ENCODE measurements at regions of chrX and their contacts with region 1.

Region 1: GRCh38 chrX:11100281-11101035 is 10.7 kb upstream of the HCCS start:
- DNase-seq: no peak
- ATAC-seq: no peak
- H3K4me3 ChIP-seq: no peak overlapping the region
- H3K27ac ChIP-seq: no peak overlapping the region
- H3K4me1 ChIP-seq: no peaks in the 10 kb centered on the region
- H3K27me3 ChIP-seq: no peaks in the 10 kb centered on the region
- CTCF ChIP-seq: peak in 2 of 3 experiments; percentile 27 to 45; a peak in 4 of 6 replicates
- POLR2A ChIP-seq: no peak
- RAD21 ChIP-seq: peak; percentile 55

Region 2: DNA sequence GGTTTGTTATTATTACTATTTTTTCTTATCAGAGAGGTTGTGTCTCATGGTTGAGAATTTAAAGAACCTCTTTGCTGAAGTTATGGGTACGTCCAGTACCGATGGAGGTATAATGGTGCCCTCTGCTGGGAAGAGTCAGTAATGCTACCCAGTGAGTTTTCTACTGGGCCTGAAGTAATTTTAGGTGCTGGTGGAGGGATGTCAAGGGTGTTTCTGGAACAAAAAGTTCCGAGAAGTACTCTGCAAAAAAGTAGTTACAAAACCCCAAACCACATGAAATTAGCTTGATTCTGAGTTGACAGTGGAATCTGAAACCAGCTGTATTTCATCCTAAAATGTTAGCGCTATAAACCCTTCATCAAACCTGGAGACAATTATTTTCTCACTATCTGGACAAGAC is 377.6 kb before region 1 on chrX:
- CTCF ChIA-PET with region 1: interaction called, 7 read pairs
- POLR2A ChIA-PET with region 1: no interaction called
- RAD21 ChIA-PET with region 1: no interaction called
- intact Hi-C with region 1: loop called (anchors 10 kb)
- DNase-seq: peak; percentile 10
- ATAC-seq: peak; percentile 84
- H3K4me3 ChIP-seq: no peak overlapping the region
- H3K27ac ChIP-seq: no peak overlapping the region
- H3K4me1 ChIP-seq: no peaks in the 10 kb centered on the region
- H3K27me3 ChIP-seq: no peaks in the 10 kb centered on the region
- CTCF ChIP-seq: peak; percentile 53 to 68 (median 57); a peak in 5 of 6 replicates
- POLR2A ChIP-seq: no peak
- RAD21 ChIP-seq: peak; percentile 64

Region 3: DNA sequence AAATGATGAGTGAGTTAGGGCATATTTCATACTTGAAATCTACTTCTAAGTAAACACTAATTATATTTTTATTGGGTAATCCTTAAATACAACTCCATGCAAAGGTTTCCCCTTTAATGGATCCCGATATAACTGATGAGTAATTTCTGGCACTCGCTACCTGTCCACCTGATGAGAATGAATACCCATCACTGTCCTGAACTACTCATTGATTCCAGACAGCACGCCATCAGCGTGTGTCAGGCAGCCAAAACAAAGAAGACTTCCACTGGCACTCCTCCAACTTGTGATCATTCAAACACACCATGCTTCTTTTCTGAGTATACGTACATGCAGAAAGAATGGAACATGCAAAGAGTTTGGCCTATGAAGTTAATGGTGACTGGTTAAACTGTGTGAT is 80.1 kb after region 1 on chrX:
- CTCF ChIA-PET with region 1: no interaction called
- POLR2A ChIA-PET with region 1: no interaction called
- RAD21 ChIA-PET with region 1: no interaction called
- intact Hi-C with region 1: no loop called
- DNase-seq: no peak
- ATAC-seq: no peak
- H3K4me3 ChIP-seq: no peak overlapping the region
- H3K27ac ChIP-seq: no peak overlapping the region
- H3K4me1 ChIP-seq: no peaks in the 10 kb centered on the region
- H3K27me3 ChIP-seq: no peaks in the 10 kb centered on the region
- CTCF ChIP-seq: no peak
- POLR2A ChIP-seq: no peak
- RAD21 ChIP-seq: no peak

Region 4: DNA sequence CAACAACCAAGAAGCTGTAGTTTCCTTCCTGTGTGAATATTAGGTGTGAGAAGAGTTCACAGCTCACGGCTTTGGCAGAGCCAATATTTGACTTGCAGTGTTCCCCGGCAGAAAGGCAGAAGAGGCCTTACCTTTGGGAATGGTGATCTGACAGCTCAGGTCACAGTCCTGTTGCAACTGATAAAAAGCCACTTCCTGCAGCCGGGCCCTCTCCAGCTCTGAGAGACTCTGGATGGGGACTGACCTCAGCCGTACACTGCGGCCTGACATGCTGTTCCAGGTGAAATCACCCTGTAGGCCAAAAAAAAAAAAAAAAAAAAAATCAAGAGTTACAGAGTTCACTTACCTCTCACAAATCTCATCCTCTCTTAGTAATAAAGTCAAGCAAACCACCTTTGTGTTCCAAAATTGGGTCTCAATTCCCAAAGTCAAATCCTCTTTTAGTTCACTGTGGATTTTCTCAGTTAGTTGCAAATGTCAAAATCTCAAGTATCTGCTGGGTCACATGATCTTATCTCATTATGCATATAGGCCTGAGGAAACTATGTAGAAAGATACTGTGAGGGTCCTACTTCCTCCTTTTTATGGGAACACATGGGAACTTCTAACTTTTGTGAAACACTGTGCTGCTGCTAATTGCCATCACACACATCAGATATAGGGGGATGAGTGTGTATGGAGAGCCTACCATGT is 154.1 kb after region 1 on chrX:
- CTCF ChIA-PET with region 1: no interaction called
- POLR2A ChIA-PET with region 1: no interaction called
- RAD21 ChIA-PET with region 1: no interaction called
- intact Hi-C with region 1: no loop called
- DNase-seq: no peak
- ATAC-seq: no peak
- H3K4me3 ChIP-seq: no peak overlapping the region
- H3K27ac ChIP-seq: no peak overlapping the region
- H3K4me1 ChIP-seq: no peaks in the 10 kb centered on the region
- H3K27me3 ChIP-seq: no peaks in the 10 kb centered on the region
- CTCF ChIP-seq: no peak
- POLR2A ChIP-seq: no peak
- RAD21 ChIP-seq: no peak